ENCODE measurements at regions of chr11 and their contacts with region 1.

Region 1: DNA sequence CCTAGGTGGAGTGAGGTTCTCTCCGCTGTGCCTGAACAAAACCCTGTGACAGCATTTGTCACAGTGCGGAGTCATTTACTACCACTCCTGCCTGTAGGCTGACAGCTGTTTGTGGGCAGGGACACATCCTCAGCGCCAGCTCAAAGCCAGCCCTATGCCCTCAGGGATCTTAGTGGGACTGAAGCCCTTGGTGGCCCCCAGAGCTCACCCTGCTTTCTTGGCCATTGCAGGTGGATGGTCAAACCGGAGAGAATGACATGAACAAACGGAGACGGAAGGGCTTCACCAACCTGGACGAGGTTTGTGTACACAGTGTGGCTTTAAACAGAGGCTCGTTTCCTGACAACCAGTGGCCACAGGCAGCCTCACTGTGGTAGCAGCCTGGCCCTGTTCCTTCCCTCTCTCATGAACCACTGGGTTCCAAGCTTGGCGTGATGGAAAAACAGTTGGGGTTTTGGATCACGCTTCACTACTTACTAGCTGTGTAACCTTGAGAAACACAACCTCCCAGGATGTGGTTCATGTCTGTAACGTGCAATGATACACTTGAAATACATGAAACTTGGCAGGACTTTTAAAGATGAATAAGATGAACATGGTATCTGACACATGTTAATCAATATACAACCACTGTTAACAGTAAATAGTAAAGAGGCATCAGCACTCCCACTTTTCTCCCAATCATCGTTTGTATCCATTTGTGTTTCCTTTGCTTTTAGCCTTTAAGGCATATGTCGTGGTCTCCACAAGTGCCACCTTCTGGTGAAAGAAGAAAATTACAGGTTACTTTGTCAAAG is 125.8 kb downstream of the MICAL2 start:
- DNase-seq: peak; percentile 74
- H3K4me3 Mint-ChIP-seq: no peak overlapping the region
- H3K27ac Mint-ChIP-seq: peak overlapping the region; percentile 86
- H3K4me1 Mint-ChIP-seq: peaks cover 38% of the 10 kb centered on the region
- H3K27me3 Mint-ChIP-seq: no peaks in the 10 kb centered on the region

Region 2: GRCh38 chr11:12043959-12044819 is 192.0 kb before region 1 on chr11:
- CTCF ChIA-PET with region 1: interaction called, 88 read pairs
- POLR2A ChIA-PET with region 1: no interaction called
- intact Hi-C with region 1: loop called (anchors 1 kb)
- DNase-seq: peak; percentile 76
- H3K4me3 Mint-ChIP-seq: no peak overlapping the region
- H3K27ac Mint-ChIP-seq: no peak overlapping the region
- H3K4me1 Mint-ChIP-seq: peaks cover 4% of the 10 kb centered on the region
- H3K27me3 Mint-ChIP-seq: peaks cover 1% of the 10 kb centered on the region

Region 3: DNA sequence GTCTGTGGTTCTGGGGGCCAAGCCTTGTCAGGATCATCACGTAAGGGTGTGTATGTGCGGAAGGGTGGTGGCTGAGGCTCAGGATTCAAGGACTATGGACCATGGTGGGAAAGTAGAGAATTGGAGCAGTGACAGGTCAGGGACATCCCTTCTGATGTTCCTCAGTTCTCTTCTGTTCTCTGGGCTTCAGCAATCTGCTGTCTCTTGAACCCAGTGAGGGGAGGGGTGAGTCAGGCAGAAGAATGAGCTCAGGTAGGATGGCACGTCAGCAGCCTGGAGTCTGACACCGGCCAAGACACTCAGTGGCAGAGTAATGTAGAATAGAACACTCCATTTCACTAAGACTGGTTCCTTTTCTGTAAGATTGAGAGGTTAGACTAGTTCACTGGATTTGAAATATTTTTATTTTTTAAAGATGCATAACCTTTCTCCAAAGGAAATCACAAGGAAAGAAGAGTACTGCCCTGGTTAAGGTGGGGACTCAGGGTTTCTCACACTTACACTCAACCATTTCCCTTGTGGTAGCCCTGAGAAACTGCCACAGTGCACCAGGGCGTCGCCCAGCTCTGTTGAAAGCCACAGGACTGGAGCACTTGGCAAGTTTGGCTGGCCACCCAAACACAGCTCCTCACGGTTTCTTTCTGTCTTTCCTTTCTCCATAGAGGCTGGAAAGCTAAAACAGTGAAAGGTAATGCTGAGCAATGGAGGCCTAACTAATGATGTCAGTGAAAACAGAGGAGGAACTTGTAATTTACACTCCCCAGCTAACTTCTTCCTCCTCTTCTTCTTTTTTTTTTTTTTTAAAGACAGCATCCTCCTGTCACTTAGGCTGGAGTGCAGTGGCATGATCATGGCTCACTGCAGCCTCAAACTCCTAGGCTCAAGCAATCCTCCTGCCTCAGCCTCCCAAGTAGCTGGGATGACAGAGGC is 148.8 kb before region 1 on chr11:
- CTCF ChIA-PET with region 1: interaction called, 29 read pairs
- POLR2A ChIA-PET with region 1: interaction called, 4 read pairs
- intact Hi-C with region 1: loop called (anchors 1 kb)
- DNase-seq: peak; percentile 64
- H3K4me3 Mint-ChIP-seq: peak overlapping the region; percentile 13
- H3K27ac Mint-ChIP-seq: peak overlapping the region; percentile 68
- H3K4me1 Mint-ChIP-seq: peaks cover 60% of the 10 kb centered on the region
- H3K27me3 Mint-ChIP-seq: no peaks in the 10 kb centered on the region

Region 4: GRCh38 chr11:12159351-12160099 is 76.6 kb before region 1 on chr11:
- CTCF ChIA-PET with region 1: interaction called, 13 read pairs
- POLR2A ChIA-PET with region 1: interaction called, 5 read pairs
- intact Hi-C with region 1: no loop called
- DNase-seq: peak; percentile 11
- H3K4me3 Mint-ChIP-seq: no peak overlapping the region
- H3K27ac Mint-ChIP-seq: peak overlapping the region; percentile 36
- H3K4me1 Mint-ChIP-seq: peaks cover 58% of the 10 kb centered on the region
- H3K27me3 Mint-ChIP-seq: no peaks in the 10 kb centered on the region

Region 5: GRCh38 chr11:12192794-12193514 is 43.2 kb before region 1 on chr11:
- CTCF ChIA-PET with region 1: interaction called, 14 read pairs
- POLR2A ChIA-PET with region 1: interaction called, 8 read pairs
- intact Hi-C with region 1: loop called (anchors 1 kb)
- DNase-seq: no peak
- H3K4me3 Mint-ChIP-seq: no peak overlapping the region
- H3K27ac Mint-ChIP-seq: no peak overlapping the region
- H3K4me1 Mint-ChIP-seq: peaks cover 73% of the 10 kb centered on the region
- H3K27me3 Mint-ChIP-seq: no peaks in the 10 kb centered on the region

Region 6: GRCh38 chr11:12224537-12224893 is 11.6 kb before region 1 on chr11:
- CTCF ChIA-PET with region 1: interaction called, 59 read pairs
- POLR2A ChIA-PET with region 1: interaction called, 22 read pairs
- intact Hi-C with region 1: loop called (anchors 1 kb)
- DNase-seq: peak; percentile 98
- H3K4me3 Mint-ChIP-seq: peak overlapping the region; percentile 78
- H3K27ac Mint-ChIP-seq: peak overlapping the region; percentile 98
- H3K4me1 Mint-ChIP-seq: peaks cover 52% of the 10 kb centered on the region
- H3K27me3 Mint-ChIP-seq: no peaks in the 10 kb centered on the region